BJ (cell line): ENCODE measurements at regions of chr17 and their contacts with region 1.

Region 1: GRCh38 chr17:20992987-20993862 is 49.6 kb downstream of the USP22 start:
- DNase-seq: peak; percentile 21
- H3K4me3 ChIP-seq: no peak overlapping the region
- H3K27me3 ChIP-seq: no peaks in the 10 kb centered on the region; the same call in none of the 2 replicates
- CTCF ChIP-seq: peak; percentile 98

Region 2: DNA sequence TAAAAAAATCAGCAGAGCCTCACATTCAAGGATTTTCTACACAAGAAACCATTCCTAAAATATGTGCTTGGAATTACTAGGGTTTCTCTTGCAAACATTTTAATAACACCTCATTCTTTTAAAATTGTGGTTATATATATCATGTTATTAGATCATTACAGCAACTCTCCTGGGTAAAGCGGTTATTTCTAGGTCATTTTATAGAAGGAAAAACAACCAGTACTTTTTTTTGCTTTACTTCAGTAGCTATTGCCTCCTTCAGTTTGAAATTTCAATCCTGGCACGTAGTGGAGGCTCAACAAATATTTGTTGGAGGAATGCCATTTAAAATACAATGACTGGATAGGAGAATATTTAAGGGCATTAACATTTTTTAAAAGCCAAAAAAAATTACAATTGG is 193.1 kb before region 1 on chr17:
- CTCF ChIA-PET with region 1: interaction called, 19 read pairs
- POLR2A ChIA-PET with region 1: no interaction called
- DNase-seq: no peak
- H3K4me3 ChIP-seq: no peak overlapping the region
- H3K27me3 ChIP-seq: no peaks in the 10 kb centered on the region
- CTCF ChIP-seq: no peak